ENCODE measurements at regions of chr1 and their contacts with region 1.

Region 1: DNA sequence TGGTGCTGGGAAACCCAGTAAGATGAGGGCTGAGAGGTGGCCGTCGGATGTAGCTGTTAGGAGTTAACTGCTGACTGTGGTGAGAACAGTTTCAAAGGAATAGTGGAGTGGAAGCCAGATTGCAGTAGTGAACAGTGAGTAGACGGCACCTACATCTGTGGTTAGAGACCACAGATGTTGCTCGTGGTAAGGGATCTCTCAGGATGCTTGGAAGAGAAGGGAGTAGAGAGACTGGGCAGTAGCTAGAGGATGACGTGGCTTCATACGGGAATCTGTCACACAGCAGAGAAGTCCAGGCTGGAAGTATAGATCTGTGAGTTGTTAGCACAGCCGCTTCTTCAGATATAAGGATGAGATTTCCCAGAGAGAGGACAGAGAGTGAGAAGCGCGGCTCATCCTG is 7.8 kb upstream of the ARTN start:
- DNase-seq: no peak

Region 2: GRCh38 chr1:43602990-43603389 is 322.9 kb before region 1 on chr1:
- intact Hi-C with region 1: loop called (anchors 5 kb)
- DNase-seq: no peak

Measured in head of caudate nucleus (tissue), 42 donors.